Heart left ventricle (tissue), 16 donors: ENCODE measurements at regions of chr10 and their contacts with region 1.

Region 1: DNA sequence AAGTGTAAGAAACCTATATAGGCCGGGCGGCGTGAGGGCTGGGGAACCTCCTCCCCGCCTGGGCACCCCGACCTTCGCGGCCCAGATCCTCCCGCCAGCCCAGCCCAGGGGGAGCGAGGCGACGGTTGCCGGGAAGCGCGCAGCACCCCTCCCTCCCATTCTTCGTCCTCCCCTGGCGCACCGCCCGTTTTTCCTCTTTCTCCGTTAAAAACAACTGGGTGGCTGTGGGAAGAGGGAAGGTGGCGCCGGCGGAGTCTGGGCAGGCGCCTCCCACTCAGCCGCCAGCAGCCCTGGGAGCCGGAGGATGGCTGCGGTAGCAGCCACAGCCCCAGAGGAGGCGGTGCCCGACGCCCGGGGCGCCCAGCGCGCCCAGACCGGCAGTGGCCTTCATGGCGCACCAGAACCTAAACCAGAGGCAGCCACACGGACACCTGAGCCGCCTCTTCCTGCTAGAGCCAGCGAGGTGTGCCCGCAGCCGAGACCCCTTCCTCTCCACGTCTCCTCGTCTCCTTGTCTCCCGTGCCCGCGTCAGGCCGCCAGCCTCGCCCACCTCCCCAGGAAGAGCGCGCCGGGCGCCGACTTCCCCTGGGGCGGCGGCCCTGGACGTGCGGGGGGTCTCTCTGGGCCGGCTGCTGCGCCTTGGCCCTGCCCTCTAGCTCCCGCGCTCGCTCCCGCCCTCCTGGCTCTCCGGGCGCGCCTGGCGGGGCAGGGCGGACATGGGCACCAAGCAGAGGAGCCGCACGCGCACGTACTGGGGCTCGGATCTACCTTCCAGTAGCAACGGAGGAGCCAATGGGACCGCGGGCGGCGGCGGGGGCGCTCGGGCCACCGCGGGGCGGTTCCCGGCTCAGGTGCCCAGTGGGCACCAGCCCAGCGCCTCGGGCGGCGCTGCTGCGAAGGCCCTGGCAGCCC is 32.8 kb upstream of the SFTPD start:
- DNase-seq: peak; percentile 62 to 75 (median 71)
- ATAC-seq: peak; percentile 73 to 92 (median 92)
- H3K4me3 ChIP-seq: peak overlapping the region; percentile 62 to 91 (median 72)
- H3K27ac ChIP-seq: peak overlapping the region; percentile 50 to 93 (median 84)
- H3K4me1 ChIP-seq: peaks cover 0 to 38% (median 13%) of the 10 kb centered on the region in 12 donors
- H3K27me3 ChIP-seq: peaks cover 0 to 37% (median 0%) of the 10 kb centered on the region in 9 donors
- CTCF ChIP-seq: peak in 3 of 12 donors; percentile 7 to 26 (median 25)
- POLR2A ChIP-seq: peak in 1 of 2 donors; percentile 30

Region 2: GRCh38 chr10:80046629-80047441 is 65.1 kb after region 1 on chr10:
- intact Hi-C with region 1: loop called in 1 of 10 experiments (anchors 10 kb)
- DNase-seq: peak; percentile 73 to 87 (median 77)
- ATAC-seq: peak; percentile 82 to 93 (median 92)
- H3K4me3 ChIP-seq: no peak overlapping the region
- H3K27ac ChIP-seq: no peak overlapping the region
- H3K4me1 ChIP-seq: peaks cover 0 to 6% (median 0%) of the 10 kb centered on the region in 12 donors
- H3K27me3 ChIP-seq: no peaks in the 10 kb centered on the region
- CTCF ChIP-seq: peak; percentile 77 to 97 (median 90)
- POLR2A ChIP-seq: no peak